ENCODE measurements at regions of chr14 and their contacts with region 1.

Region 1: DNA sequence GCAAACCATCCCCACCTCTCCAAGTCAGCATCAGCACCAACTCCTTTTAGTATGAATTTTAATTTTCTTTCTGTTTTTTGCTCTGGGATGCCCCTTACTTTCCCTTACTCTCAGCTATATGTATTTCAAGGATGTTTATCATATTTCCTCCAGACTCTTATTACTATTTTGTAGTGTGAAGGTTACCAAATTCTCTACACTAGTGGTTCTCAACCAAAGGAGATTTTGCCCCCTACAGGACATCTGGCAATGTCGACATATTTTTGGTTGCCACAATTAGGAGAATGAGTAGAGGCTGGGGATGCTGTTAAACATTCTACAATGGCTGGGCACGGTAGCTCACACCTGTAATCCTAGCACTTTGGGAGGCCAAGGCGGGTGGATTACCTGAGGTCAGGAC is 29.1 kb upstream of the SOS2 start:
- DNase-seq: peak; percentile 15
- H3K4me3 ChIP-seq: no peak overlapping the region
- H3K27ac ChIP-seq: no peak overlapping the region
- H3K27me3 ChIP-seq: no peaks in the 10 kb centered on the region
- CTCF ChIP-seq: peak; percentile 69

Region 2: GRCh38 chr14:50270932-50271331 is 10.4 kb after region 1 on chr14:
- CTCF ChIA-PET with region 1: interaction called, 12 read pairs
- POLR2A ChIA-PET with region 1: no interaction called
- DNase-seq: no peak
- H3K4me3 ChIP-seq: no peak overlapping the region
- H3K27ac ChIP-seq: no peak overlapping the region
- H3K27me3 ChIP-seq: no peaks in the 10 kb centered on the region
- CTCF ChIP-seq: no peak